ENCODE measurements at regions of chr15 and their contacts with region 1.

Region 1: DNA sequence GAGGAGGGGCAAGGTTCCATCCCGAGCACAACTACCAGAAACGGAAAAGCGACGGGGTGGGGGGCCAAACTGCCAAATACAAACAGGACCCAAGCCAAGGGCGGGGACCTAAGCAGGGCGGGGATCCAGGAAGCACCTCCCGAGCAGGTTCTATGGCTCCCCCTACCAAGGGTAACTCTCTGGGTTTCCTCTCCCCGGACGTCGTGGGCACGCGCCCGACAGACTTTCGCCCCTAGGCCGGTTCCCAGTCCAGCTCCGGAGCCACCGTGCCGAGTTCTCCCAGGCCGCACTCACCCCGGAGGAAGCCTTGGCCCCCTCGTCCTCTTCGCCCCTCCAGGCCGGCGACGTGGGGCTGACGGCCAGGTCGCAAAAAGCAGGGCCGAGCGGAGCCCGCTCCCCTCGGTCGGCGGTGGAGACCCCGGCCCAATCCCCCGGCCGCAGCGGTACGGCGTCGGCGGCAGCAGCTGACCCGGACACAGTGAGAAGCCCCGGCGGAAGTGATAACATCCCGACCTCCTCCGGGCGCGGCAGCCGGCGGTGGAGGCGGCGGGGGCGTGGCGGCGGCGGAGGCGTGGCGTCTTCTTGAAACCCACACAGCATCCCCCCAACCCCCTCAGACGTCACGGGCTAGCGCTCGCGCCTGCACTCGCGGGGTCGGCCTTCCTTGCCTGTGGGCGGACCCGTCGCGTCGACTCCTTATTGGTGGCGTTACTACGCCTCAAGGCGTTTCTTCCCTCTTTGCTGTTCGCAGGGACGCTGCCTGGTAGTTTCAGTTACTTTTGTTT is at the start of gene BNIP2:
- DNase-seq: peak; percentile 97
- H3K4me3 ChIP-seq: peak within 1 kb of the TSS; percentile 80 to 97 (median 91)
- H3K27ac ChIP-seq: peak within 1 kb of the TSS; percentile 92
- H3K4me1 ChIP-seq: peaks cover 23% of the 10 kb centered on the region
- H3K27me3 ChIP-seq: no peaks in the 10 kb centered on the region
- CTCF ChIP-seq: no peak
- total RNA-seq, gene BNIP2: 78.2 to 107 TPM

Region 2: GRCh38 chr15:59725172-59725486 is 36.1 kb after region 1 on chr15:
- CTCF ChIA-PET with region 1: no interaction called
- dilution Hi-C with region 1: no loop called
- in situ Hi-C with region 1: no loop called
- intact Hi-C with region 1: loop called (anchors 1 kb)
- DNase-seq: no peak
- H3K4me3 ChIP-seq: no peak overlapping the region
- H3K27ac ChIP-seq: no peak overlapping the region
- H3K4me1 ChIP-seq: peaks cover 6% of the 10 kb centered on the region
- H3K27me3 ChIP-seq: no peaks in the 10 kb centered on the region
- CTCF ChIP-seq: no peak

Region 3: DNA sequence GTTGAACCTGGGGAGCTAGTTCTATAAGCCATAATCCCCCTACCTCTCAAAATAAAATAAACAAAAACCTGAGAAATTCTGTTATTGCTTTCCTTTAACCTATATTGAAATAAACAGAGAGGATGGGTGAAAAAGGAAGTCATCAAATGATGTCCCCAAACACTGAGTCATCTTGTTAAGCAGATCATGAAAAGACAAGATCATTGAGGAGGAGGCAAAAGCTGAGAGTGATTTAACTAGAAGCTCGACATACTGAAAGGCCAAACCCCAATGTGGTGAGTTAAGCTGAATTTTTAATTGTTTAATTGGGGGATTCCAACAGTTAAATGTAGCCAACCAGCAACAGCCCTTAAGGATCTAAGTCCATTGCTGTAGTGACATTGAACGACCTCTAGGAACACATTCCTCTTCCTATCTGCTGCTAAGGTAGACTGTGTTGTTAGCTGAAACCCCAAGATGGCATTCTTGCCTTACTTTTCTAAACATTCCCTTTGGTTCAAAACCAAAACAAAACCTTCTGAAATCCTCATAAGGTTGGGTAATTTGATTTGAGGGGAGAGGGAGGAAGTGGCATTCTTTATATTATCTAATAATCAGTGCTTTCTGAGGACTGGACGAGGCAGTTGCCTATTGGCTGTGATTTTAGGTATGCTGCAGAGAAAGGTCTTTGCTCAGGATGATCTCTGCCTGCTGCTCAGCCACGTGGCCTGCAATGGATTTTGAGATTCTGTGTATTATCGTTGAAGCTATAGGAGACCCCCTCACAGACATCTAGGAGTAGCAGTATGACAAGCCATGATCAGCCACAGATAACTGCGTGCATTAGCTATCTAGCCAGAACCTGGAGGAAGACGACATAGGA is 62.8 kb after region 1 on chr15:
- CTCF ChIA-PET with region 1: no interaction called
- dilution Hi-C with region 1: no loop called
- in situ Hi-C with region 1: no loop called
- intact Hi-C with region 1: loop called (anchors 2 kb)
- DNase-seq: peak; percentile 41
- H3K4me3 ChIP-seq: no peak overlapping the region
- H3K27ac ChIP-seq: no peak overlapping the region
- H3K4me1 ChIP-seq: no peaks in the 10 kb centered on the region
- H3K27me3 ChIP-seq: no peaks in the 10 kb centered on the region
- CTCF ChIP-seq: peak; percentile 48 to 62

Region 4: GRCh38 chr15:59764775-59765174 is 75.7 kb after region 1 on chr15:
- CTCF ChIA-PET with region 1: no interaction called
- dilution Hi-C with region 1: no loop called
- in situ Hi-C with region 1: no loop called
- intact Hi-C with region 1: no loop called
- DNase-seq: no peak
- H3K4me3 ChIP-seq: no peak overlapping the region
- H3K27ac ChIP-seq: no peak overlapping the region
- H3K4me1 ChIP-seq: no peaks in the 10 kb centered on the region
- H3K27me3 ChIP-seq: no peaks in the 10 kb centered on the region
- CTCF ChIP-seq: peak in 1 of 2 donors; percentile 36

Region 5: GRCh38 chr15:59779110-59779509 is 90.1 kb after region 1 on chr15:
- CTCF ChIA-PET with region 1: no interaction called
- dilution Hi-C with region 1: no loop called
- in situ Hi-C with region 1: no loop called
- intact Hi-C with region 1: no loop called
- DNase-seq: no peak
- H3K4me3 ChIP-seq: no peak overlapping the region
- H3K27ac ChIP-seq: no peak overlapping the region
- H3K4me1 ChIP-seq: no peaks in the 10 kb centered on the region
- H3K27me3 ChIP-seq: peaks cover under 1% of the 10 kb centered on the region
- CTCF ChIP-seq: no peak

Measured in mammary epithelial cell (primary cell).